Panc1 (cell line): ENCODE measurements at regions of chr2 and their contacts with region 1.

Region 1: GRCh38 chr2:27409321-27410073 is at the start of gene PPM1G:
- DNase-seq: peak; percentile 76
- ATAC-seq: peak; percentile 98
- H3K4me3 ChIP-seq: peak within 1 kb of the TSS; percentile 93 to 96
- H3K27ac ChIP-seq: peak within 1 kb of the TSS; percentile 100
- H3K4me1 ChIP-seq: peaks cover 16% of the 10 kb centered on the region
- H3K27me3 ChIP-seq: no peaks in the 10 kb centered on the region
- CTCF ChIP-seq: no peak
- total RNA-seq, gene PPM1G: 115 TPM

Region 2: GRCh38 chr2:27170581-27171333 is 238.7 kb before region 1 on chr2:
- CTCF ChIA-PET with region 1: no interaction called
- POLR2A ChIA-PET with region 1: no interaction called
- in situ Hi-C with region 1: no loop called
- intact Hi-C with region 1: no loop called
- DNase-seq: no peak
- ATAC-seq: no peak
- H3K4me3 ChIP-seq: no peak overlapping the region
- H3K27ac ChIP-seq: no peak overlapping the region
- H3K4me1 ChIP-seq: no peaks in the 10 kb centered on the region
- H3K27me3 ChIP-seq: no peaks in the 10 kb centered on the region
- CTCF ChIP-seq: no peak

Region 3: GRCh38 chr2:27303093-27304025 is 106.1 kb before region 1 on chr2:
- CTCF ChIA-PET with region 1: no interaction called
- POLR2A ChIA-PET with region 1: no interaction called
- in situ Hi-C with region 1: no loop called
- intact Hi-C with region 1: no loop called
- DNase-seq: no peak
- ATAC-seq: peak; percentile 76
- H3K4me3 ChIP-seq: peak overlapping the region; percentile 31 to 55
- H3K27ac ChIP-seq: peak overlapping the region; percentile 45; the same call in 1 of the 2 replicates
- H3K4me1 ChIP-seq: no peaks in the 10 kb centered on the region
- H3K27me3 ChIP-seq: no peaks in the 10 kb centered on the region
- CTCF ChIP-seq: peak; percentile 93

Region 4: DNA sequence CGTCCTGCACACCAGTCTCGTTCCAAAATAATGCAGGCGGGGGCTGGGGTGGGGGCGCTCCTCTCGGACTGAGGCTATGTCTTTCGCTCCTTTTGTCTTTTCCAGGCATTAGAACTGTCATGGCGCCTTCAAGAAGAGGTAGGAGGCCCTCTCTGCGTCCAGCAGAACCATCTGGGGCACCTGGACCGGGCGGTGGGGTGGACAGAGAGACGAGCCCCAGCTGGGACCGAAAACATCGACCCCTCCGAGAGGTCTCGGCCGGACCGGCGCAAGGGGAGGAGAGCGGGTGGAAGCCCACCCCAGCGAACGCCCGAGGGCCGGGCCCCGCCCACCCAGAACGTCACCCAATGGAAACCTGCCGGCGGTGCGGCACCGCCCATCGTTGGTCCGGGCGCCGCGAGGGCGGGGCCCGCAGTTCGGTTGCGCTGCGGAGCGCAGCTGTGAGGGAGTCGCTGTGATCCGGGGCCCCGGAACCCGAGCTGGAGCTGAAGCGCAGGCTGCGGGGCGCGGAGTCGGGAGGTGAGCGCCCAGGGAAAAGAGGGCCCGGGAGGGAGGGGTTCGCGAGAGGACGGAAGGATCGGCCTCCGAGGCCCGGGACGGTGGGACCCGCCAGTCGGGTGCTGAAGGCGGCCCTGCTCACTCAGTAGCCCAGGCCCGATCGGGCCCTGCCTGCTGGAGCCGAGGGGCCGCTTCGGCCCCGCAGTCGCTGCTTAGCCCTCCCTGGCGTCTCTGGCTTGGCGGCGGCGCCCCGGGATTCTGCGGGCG is 18.9 kb after region 1 on chr2 and contains the start of gene NRBP1:
- CTCF ChIA-PET with region 1: interaction called, 11 read pairs
- POLR2A ChIA-PET with region 1: no interaction called
- in situ Hi-C with region 1: no loop called
- intact Hi-C with region 1: no loop called
- DNase-seq: peak; percentile 46
- ATAC-seq: peak; percentile 95
- H3K4me3 ChIP-seq: peak within 1 kb of the TSS; percentile 66 to 73
- H3K27ac ChIP-seq: peak within 1 kb of the TSS; percentile 93
- H3K4me1 ChIP-seq: peaks cover 15% of the 10 kb centered on the region
- H3K27me3 ChIP-seq: no peaks in the 10 kb centered on the region
- CTCF ChIP-seq: no peak
- total RNA-seq, gene NRBP1: 103 TPM

Region 5: GRCh38 chr2:27628767-27629709 is 219.5 kb after region 1 on chr2 and contains the starts of genes CCDC121 and GPN1:
- CTCF ChIA-PET with region 1: no interaction called
- POLR2A ChIA-PET with region 1: no interaction called
- in situ Hi-C with region 1: no loop called
- intact Hi-C with region 1: loop called (anchors 5 kb)
- DNase-seq: peak; percentile 53
- ATAC-seq: peak; percentile 99
- H3K4me3 ChIP-seq: peak within 1 kb of the TSS; percentile 77 to 100
- H3K27ac ChIP-seq: peak within 1 kb of the TSS; percentile 92
- H3K4me1 ChIP-seq: peaks cover 8% of the 10 kb centered on the region
- H3K27me3 ChIP-seq: no peaks in the 10 kb centered on the region
- CTCF ChIP-seq: no peak
- total RNA-seq, gene CCDC121: 5.9 TPM
- total RNA-seq, gene GPN1: 37.2 TPM